ENCODE measurements at regions of chr22 and their contacts with region 1.

Region 1: GRCh38 chr22:42444077-42444904 is 12.1 kb upstream of the NFAM1 start:
- DNase-seq: peak in 1 of 2 experiments; percentile 97
- H3K4me3 ChIP-seq: peak overlapping the region; percentile 26 to 54 (median 38); a peak in 6 of 8 replicates
- H3K27ac ChIP-seq: no peak overlapping the region
- H3K4me1 ChIP-seq: peaks cover 9 to 34% (median 19%) of the 10 kb centered on the region in 4 experiments
- H3K27me3 ChIP-seq: peaks cover 0 to 2% (median 0%) of the 10 kb centered on the region in 4 experiments; a peak in 2 of 7 replicates
- CTCF ChIP-seq: peak; percentile 88 to 91 (median 91)
- EP300 ChIP-seq: peak in 1 of 2 experiments; percentile 36; a peak in 1 of 3 replicates
- POLR2A ChIP-seq: no peak
- RAD21 ChIP-seq: peak; percentile 92 to 94

Region 2: GRCh38 chr22:42169055-42169469 is 275.2 kb before region 1 on chr22:
- CTCF ChIA-PET with region 1: interaction called, 10 read pairs
- POLR2A ChIA-PET with region 1: no interaction called
- DNase-seq: peak; percentile 38 to 90
- H3K4me3 ChIP-seq: no peak overlapping the region
- H3K27ac ChIP-seq: no peak overlapping the region; the same call in 1 of the 2 replicates
- H3K4me1 ChIP-seq: peaks cover 0 to 5% (median 1%) of the 10 kb centered on the region in 4 experiments; a peak in 3 of 7 replicates
- H3K27me3 ChIP-seq: no peaks in the 10 kb centered on the region
- CTCF ChIP-seq: peak; percentile 99 to 100 (median 100)
- EP300 ChIP-seq: no peak
- POLR2A ChIP-seq: no peak
- RAD21 ChIP-seq: peak; percentile 99 to 100

Region 3: GRCh38 chr22:42313804-42314581 is 130.3 kb before region 1 on chr22:
- CTCF ChIA-PET with region 1: interaction called, 14 read pairs
- POLR2A ChIA-PET with region 1: no interaction called
- DNase-seq: peak; percentile 72 to 78
- H3K4me3 ChIP-seq: no peak overlapping the region
- H3K27ac ChIP-seq: no peak overlapping the region
- H3K4me1 ChIP-seq: peaks cover 0 to 34% (median 19%) of the 10 kb centered on the region in 4 experiments; a peak in 5 of 7 replicates
- H3K27me3 ChIP-seq: no peaks in the 10 kb centered on the region; a peak in 2 of 7 replicates
- CTCF ChIP-seq: peak; percentile 72 to 77 (median 75)
- EP300 ChIP-seq: no peak
- POLR2A ChIP-seq: no peak
- RAD21 ChIP-seq: peak; percentile 79 to 86

Region 4: GRCh38 chr22:42353883-42354727 is 90.2 kb before region 1 on chr22:
- CTCF ChIA-PET with region 1: interaction called, 23 read pairs
- POLR2A ChIA-PET with region 1: interaction called, 3 read pairs
- DNase-seq: no peak
- H3K4me3 ChIP-seq: no peak overlapping the region
- H3K27ac ChIP-seq: no peak overlapping the region
- H3K4me1 ChIP-seq: peaks cover 3 to 14% (median 9%) of the 10 kb centered on the region in 4 experiments
- H3K27me3 ChIP-seq: no peaks in the 10 kb centered on the region; a peak in 2 of 7 replicates
- CTCF ChIP-seq: peak in 2 of 3 experiments; percentile 19 to 30; a peak in 3 of 4 replicates
- EP300 ChIP-seq: 0 out of 3 replicates have a peak, but pooled peaks of 1 of the 2 experiments have one; percentile 24
- POLR2A ChIP-seq: no peak
- RAD21 ChIP-seq: peak in 1 of 2 experiments; percentile 34; a peak in 2 of 4 replicates

Region 5: GRCh38 chr22:42385696-42386095 is 58.6 kb before region 1 on chr22:
- CTCF ChIA-PET with region 1: interaction called, 22 read pairs
- POLR2A ChIA-PET with region 1: interaction called, 3 read pairs
- DNase-seq: no peak
- H3K4me3 ChIP-seq: no peak overlapping the region
- H3K27ac ChIP-seq: no peak overlapping the region
- H3K4me1 ChIP-seq: peaks cover 0 to 18% (median 9%) of the 10 kb centered on the region in 4 experiments; a peak in 6 of 7 replicates
- H3K27me3 ChIP-seq: peaks cover 0 to 8% (median 2%) of the 10 kb centered on the region in 4 experiments; a peak in 3 of 7 replicates
- CTCF ChIP-seq: no peak
- EP300 ChIP-seq: no peak
- POLR2A ChIP-seq: no peak
- RAD21 ChIP-seq: no peak

Region 6: GRCh38 chr22:42432020-42432596 is 12.2 kb before region 1 on chr22 and contains the start of gene NFAM1:
- CTCF ChIA-PET with region 1: interaction called, 48 read pairs
- POLR2A ChIA-PET with region 1: interaction called, 5 read pairs
- DNase-seq: no peak
- H3K4me3 ChIP-seq: peak within 1 kb of the TSS in 1 of 4 experiments; percentile 37; a peak in 1 of 8 replicates
- H3K27ac ChIP-seq: no peak within 1 kb of the TSS
- H3K4me1 ChIP-seq: peaks cover 6 to 18% (median 15%) of the 10 kb centered on the region in 4 experiments
- H3K27me3 ChIP-seq: peaks cover 0 to 5% (median 3%) of the 10 kb centered on the region in 4 experiments; a peak in 3 of 7 replicates
- CTCF ChIP-seq: no peak
- EP300 ChIP-seq: no peak
- POLR2A ChIP-seq: no peak
- RAD21 ChIP-seq: no peak
- total RNA-seq, gene NFAM1: 0.61 and 0.73 TPM in 2 replicates

Region 7: GRCh38 chr22:42473484-42474193 is 29.3 kb after region 1 on chr22:
- CTCF ChIA-PET with region 1: interaction called, 41 read pairs
- POLR2A ChIA-PET with region 1: no interaction called
- DNase-seq: no peak
- H3K4me3 ChIP-seq: no peak overlapping the region
- H3K27ac ChIP-seq: no peak overlapping the region
- H3K4me1 ChIP-seq: 0 out of 7 replicates have a peak, but pooled peaks cover 0 to 1% (median 0%) of the 10 kb centered on the region in 4 experiments
- H3K27me3 ChIP-seq: no peaks in the 10 kb centered on the region
- CTCF ChIP-seq: peak in 2 of 3 experiments; percentile 64 to 77; a peak in 3 of 4 replicates
- EP300 ChIP-seq: 0 out of 3 replicates have a peak, but pooled peaks of 1 of the 2 experiments have one; percentile 7
- POLR2A ChIP-seq: no peak
- RAD21 ChIP-seq: peak; percentile 64 to 72

Region 8: DNA sequence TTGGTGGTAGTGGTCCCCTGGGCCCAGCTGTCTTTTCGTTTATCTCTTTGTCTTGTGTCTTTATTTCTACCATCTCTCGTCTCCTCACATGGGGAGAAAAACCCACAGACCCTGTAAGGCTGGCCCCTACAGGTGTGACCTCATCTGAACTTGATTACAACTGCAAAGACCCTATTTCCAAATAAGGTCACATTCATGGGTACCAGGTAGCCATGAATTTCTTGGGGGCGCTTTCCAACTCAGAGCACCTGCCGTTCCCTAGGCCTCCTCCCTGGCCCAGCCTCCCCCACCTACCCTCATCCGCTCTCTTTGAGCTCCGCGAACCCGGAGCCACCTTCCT is 89.3 kb after region 1 on chr22:
- CTCF ChIA-PET with region 1: no interaction called
- POLR2A ChIA-PET with region 1: no interaction called
- DNase-seq: no peak
- H3K4me3 ChIP-seq: no peak overlapping the region
- H3K27ac ChIP-seq: no peak overlapping the region
- H3K4me1 ChIP-seq: no peaks in the 10 kb centered on the region
- H3K27me3 ChIP-seq: no peaks in the 10 kb centered on the region
- CTCF ChIP-seq: no peak
- EP300 ChIP-seq: no peak
- POLR2A ChIP-seq: no peak
- RAD21 ChIP-seq: no peak